PC-9 (cell line): ENCODE measurements at regions of chr3 and their contacts with region 1.

Region 1: DNA sequence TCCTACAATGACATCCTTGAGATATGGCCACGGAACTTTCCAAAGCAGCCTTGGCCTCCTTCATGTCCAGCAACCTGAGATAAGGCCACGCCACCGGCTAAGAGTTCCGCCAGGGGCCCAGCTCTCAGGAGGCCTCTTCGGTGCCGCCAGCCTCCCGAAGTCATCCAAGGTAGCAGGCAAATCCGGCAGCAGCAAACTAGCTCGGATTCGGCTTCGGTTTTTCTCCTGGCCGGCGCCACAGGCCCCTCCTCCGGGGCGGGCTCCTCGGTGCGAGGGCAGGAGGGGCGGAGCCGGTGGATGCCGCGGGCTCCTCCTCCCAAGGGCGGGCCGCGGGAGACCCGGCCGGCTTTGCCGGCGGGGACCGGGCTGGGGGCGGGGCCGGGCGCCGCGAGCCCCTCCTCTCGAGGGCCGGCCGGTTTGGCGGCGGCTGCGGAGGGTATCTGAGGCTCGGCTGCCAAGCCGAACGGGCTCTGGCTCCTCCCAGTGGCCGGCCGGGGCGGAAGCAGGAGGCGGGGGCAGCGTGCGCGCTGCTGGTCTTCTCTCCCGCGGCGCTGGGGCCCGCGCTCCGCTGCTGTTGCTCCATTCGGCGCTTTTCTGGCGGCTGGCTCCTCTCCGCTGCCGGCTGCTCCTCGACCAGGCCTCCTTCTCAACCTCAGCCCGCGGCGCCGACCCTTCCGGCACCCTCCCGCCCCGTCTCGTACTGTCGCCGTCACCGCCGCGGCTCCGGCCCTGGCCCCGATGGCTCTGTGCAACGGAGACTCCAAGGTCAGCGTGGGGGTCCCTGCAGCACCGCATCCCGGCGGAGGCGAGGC is at the start of gene GMPS:
- DNase-seq: peak; percentile 84 to 99
- H3K4me3 ChIP-seq: peak within 1 kb of the TSS; percentile 91
- H3K27ac ChIP-seq: peak within 1 kb of the TSS; percentile 79
- H3K4me1 ChIP-seq: peaks cover 21% of the 10 kb centered on the region
- H3K27me3 ChIP-seq: no peaks in the 10 kb centered on the region
- CTCF ChIP-seq: peak; percentile 58
- total RNA-seq, gene GMPS: 116 and 139 TPM in 2 replicates

Region 2: DNA sequence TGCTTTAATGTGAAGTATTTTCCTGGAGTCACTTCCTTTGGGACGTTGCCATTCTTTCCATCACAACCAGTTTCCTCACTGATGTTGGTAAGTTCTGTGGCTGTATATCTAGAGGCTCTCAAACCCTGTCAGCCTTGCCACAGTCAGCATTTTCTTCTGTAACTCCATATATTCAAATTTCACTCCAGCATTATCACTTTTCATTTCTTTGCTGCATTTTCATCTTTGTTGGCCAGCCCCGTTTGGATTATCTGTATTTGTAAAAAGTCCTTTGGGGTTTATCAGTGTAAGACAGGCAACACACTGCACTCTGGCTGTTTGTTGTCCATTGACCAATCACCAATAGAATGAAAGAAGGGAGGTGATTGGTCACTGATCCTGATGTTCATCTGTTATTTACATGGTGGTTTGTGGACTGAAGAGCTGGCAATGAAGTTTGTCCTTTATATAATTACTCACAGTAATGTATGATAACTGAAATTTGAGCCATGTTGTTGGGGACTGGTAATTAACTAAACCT is 20.4 kb after region 1 on chr3:
- CTCF ChIA-PET with region 1: no interaction called
- POLR2A ChIA-PET with region 1: interaction called, 11 read pairs
- intact Hi-C with region 1: no loop called
- DNase-seq: no peak
- H3K4me3 ChIP-seq: no peak overlapping the region
- H3K27ac ChIP-seq: no peak overlapping the region
- H3K4me1 ChIP-seq: no peaks in the 10 kb centered on the region
- H3K27me3 ChIP-seq: no peaks in the 10 kb centered on the region
- CTCF ChIP-seq: no peak

Region 3: DNA sequence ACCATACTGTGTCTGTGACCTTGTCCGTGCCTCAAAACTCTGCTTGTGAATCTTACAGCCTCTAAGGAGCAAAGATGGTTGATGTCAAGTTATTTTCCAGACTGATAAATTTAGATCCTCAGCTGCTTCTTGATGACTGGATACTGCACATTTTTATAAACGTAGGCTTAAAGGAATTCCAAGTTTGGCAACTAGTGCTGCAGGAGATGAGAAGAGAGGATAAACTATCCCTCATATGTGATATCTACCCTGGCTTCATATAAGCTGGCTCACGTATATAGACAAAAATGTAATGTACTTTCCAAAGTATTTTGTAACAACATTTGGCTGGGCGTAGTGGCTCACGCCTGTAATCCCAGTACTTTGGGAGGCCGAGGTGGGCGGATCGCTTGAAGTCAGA is 89.7 kb after region 1 on chr3:
- CTCF ChIA-PET with region 1: no interaction called
- POLR2A ChIA-PET with region 1: no interaction called
- intact Hi-C with region 1: no loop called
- DNase-seq: no peak
- H3K4me3 ChIP-seq: no peak overlapping the region
- H3K27ac ChIP-seq: no peak overlapping the region
- H3K4me1 ChIP-seq: no peaks in the 10 kb centered on the region
- H3K27me3 ChIP-seq: no peaks in the 10 kb centered on the region
- CTCF ChIP-seq: no peak